ENCODE measurements at regions of chr15 and their contacts with region 1.

Region 1: DNA sequence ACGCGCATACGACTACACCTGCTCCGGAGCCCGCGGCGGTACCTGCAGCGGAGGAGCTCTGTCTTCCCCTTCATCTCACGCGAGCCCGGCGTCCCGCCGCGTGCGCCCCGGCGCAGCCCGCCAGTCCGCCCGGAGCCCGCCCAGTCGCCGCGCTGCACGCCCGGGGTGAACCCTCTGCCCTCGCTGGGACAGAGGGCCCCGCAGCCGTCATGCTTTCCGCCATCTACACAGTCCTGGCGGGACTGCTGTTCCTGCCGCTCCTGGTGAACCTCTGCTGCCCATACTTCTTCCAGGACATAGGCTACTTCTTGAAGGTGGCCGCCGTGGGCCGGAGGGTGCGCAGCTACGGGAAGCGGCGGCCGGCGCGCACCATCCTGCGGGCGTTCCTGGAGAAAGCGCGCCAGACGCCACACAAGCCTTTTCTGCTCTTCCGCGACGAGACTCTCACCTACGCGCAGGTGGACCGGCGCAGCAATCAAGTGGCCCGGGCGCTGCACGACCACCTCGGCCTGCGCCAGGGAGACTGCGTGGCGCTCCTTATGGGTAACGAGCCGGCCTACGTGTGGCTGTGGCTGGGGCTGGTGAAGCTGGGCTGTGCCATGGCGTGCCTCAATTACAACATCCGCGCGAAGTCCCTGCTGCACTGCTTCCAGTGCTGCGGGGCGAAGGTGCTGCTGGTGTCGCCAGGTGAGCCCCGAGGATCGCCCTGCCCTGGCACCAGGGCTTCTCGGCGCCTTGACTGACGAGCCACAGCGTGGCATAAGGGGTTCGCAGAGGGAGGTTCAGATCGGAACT is 420 bp downstream of the SLC27A2 start:
- DNase-seq: peak; percentile 53
- H3K4me3 Mint-ChIP-seq: peak overlapping the region; percentile 98
- H3K27ac Mint-ChIP-seq: peak overlapping the region; percentile 96
- H3K4me1 Mint-ChIP-seq: peaks cover 44% of the 10 kb centered on the region
- H3K27me3 Mint-ChIP-seq: no peaks in the 10 kb centered on the region

Region 2: GRCh38 chr15:50116473-50116872 is 65.9 kb before region 1 on chr15:
- intact Hi-C with region 1: loop called (anchors 5 kb)
- DNase-seq: no peak
- H3K4me3 Mint-ChIP-seq: peak overlapping the region; percentile 80
- H3K27ac Mint-ChIP-seq: peak overlapping the region; percentile 75
- H3K4me1 Mint-ChIP-seq: peaks cover 60% of the 10 kb centered on the region
- H3K27me3 Mint-ChIP-seq: no peaks in the 10 kb centered on the region

Region 3: DNA sequence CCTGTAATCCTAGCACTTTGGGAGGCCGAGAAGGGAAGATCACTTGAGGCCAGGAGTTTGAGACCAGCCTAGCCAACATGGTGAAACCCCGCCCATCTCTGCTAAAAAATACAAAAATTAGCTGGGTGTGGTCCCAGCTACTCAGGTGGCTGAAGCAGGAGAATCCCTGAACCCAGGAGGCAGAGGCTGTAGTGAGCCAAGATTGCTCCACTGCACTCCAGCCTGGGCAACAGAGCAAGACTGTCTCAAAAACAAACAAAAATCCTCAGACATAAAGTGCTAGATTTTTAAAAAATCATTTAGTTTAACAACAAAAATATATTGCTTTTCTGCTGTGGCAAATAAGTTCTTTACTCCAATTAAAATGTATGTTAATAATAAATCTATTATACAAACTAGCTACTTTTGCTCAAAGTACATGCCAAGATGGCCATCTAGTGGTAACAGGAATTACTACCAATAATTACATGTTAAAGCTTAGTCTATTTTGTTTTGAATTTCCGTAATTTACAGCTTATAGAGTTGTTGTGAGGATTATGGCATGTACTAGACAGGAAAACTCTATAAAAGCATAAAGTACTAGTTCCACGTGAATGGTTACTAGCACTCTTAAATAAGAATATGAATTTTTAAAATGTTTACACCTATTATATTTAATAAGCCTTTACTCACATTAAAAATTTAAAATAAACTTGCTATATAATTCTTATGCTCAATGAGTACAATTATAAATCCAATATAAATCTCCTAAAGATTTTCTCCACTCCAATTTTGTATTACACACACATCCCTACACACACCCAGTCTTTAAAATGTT is 133.6 kb after region 1 on chr15:
- intact Hi-C with region 1: loop called (anchors 2 kb)
- DNase-seq: no peak
- H3K4me3 Mint-ChIP-seq: no peak overlapping the region
- H3K27ac Mint-ChIP-seq: no peak overlapping the region
- H3K4me1 Mint-ChIP-seq: peaks cover 34% of the 10 kb centered on the region
- H3K27me3 Mint-ChIP-seq: no peaks in the 10 kb centered on the region

Region 4: DNA sequence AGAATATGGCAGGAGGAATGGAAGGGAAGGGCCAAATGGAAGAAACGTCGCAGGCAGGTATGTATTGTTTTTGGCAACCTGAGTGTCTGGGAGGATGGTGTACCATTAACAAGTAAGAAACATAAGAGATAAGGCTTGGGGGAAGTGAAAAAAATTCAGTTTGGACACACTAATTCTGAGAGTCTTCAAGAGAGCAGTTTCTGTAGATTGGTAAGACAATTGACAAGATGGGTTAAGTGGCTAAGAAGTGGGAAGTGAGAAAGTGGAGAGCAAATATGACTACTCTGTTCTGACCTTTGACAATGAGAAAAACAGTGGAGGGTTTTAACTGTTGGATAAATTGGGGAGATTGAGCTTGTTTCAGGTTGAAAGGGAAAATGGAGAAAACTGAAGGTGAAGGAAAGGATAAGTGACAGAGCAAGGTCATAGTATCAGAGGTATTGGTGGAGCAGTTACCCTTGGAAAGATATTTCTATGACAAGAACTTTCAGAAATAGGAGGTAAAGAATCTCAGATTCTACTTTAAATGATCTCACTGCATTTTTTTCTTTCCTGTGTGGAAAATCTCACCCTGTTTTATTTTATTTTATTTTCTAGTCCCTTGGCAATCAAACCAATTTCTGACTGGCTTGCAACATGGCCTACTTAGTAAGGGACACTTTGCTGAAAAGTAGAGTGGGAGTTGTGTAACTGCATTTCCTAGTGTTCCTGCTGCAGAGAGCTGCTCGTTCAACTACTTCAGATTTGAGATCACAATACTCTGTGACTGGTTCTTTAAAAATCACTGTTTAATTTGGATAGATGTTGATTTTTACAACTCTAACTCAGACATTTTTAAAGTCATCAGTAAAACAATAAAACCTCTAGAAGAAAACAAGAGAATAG is 195.7 kb after region 1 on chr15:
- intact Hi-C with region 1: no loop called
- DNase-seq: no peak
- H3K4me3 Mint-ChIP-seq: peak overlapping the region; percentile 51
- H3K27ac Mint-ChIP-seq: peak overlapping the region; percentile 92
- H3K4me1 Mint-ChIP-seq: peaks cover 18% of the 10 kb centered on the region
- H3K27me3 Mint-ChIP-seq: no peaks in the 10 kb centered on the region

Measured in activated T-helper 2 cell treated with anti-CD3 and anti-CD28 coated beads, Interferon-gamma antibody, Interleukin-2, Interleukin-4, amounts not matched to agents 10 μg/mL and 5 μg/mL and 100 μg/mL, durations not matched to agents 14 hours and 24 hours and 36 hours (primary cell).